Uterus (tissue), 4 donors: ENCODE measurements at regions of chr4 and their contacts with region 1.

Region 1: GRCh38 chr4:14241574-14241973 is 614.0 kb upstream of the BOD1L1 start:
- DNase-seq: no peak
- H3K4me3 ChIP-seq: no peak overlapping the region
- H3K27ac ChIP-seq: no peak overlapping the region
- H3K4me1 ChIP-seq: no peaks in the 10 kb centered on the region
- H3K27me3 ChIP-seq: no peaks in the 10 kb centered on the region
- CTCF ChIP-seq: no peak
- POLR2A ChIP-seq: no peak

Region 2: GRCh38 chr4:13728761-13729160 is 512.8 kb before region 1 on chr4:
- intact Hi-C with region 1: loop called (anchors 5 kb)
- DNase-seq: no peak
- H3K4me3 ChIP-seq: no peak overlapping the region
- H3K27ac ChIP-seq: no peak overlapping the region
- H3K4me1 ChIP-seq: no peaks in the 10 kb centered on the region
- H3K27me3 ChIP-seq: no peaks in the 10 kb centered on the region
- CTCF ChIP-seq: no peak
- POLR2A ChIP-seq: no peak

Region 3: GRCh38 chr4:14375816-14376215 is 134.2 kb after region 1 on chr4:
- intact Hi-C with region 1: no loop called
- DNase-seq: no peak
- H3K4me3 ChIP-seq: no peak overlapping the region
- H3K27ac ChIP-seq: no peak overlapping the region
- H3K4me1 ChIP-seq: no peaks in the 10 kb centered on the region
- H3K27me3 ChIP-seq: no peaks in the 10 kb centered on the region
- CTCF ChIP-seq: no peak
- POLR2A ChIP-seq: no peak